ENCODE measurements at regions of chr10 and their contacts with region 1.

Region 1: DNA sequence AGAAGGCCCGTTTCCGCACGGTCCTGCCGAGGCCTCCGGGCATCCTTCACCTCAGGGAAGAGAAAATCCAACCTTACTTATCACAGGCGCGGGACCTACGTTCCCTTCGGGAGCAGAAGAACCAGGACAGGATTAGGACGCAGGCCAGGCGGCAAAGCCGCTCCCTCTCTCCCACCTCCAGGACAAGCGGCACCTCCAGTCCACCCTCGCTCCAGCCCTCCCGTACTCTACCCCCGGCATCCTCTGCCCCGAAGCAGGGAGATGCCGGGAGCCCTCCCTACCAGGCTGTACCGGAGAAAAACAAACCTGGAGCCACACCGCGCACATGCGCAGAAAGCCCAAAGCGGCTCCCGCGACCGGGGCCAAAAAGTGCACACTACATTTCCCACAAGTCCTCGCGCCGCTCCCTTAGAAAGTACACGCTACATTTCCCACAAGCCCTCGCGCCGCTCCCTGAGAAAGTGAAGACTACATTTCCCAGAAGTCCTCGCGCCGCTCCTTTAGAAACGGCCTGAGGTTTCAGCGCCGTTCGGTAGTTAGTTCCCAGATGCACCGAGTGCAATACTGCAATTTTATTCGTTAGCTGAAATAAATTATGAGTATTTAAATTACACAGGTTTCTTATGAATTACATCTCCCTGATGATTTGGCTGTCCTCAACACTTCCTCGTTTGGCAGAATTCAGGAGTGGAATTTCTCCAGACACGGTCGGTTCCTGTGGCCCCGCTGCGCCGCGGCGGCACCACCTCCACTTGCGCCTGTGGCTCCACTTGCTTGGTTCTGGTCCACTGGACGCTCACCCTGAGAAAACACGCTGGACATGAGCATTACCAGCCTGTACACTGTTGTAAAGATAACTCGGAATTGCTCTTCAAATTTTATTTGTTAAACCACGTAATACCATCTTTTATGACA is 85.6 kb downstream of the ZNF33B start:
- DNase-seq: peak; percentile 97 to 98
- H3K4me3 ChIP-seq: peak overlapping the region; percentile 89
- H3K4me3 Mint-ChIP-seq: peak overlapping the region; percentile 99
- H3K27ac Mint-ChIP-seq: peak overlapping the region; percentile 89
- H3K4me1 ChIP-seq: peaks cover 5% of the 10 kb centered on the region; the same call in 1 of the 2 replicates
- H3K4me1 Mint-ChIP-seq: no peaks in the 10 kb centered on the region
- H3K27me3 ChIP-seq: no peaks in the 10 kb centered on the region
- H3K27me3 Mint-ChIP-seq: no peaks in the 10 kb centered on the region
- CTCF ChIP-seq: no peak

Region 2: GRCh38 chr10:42513921-42514320 is 38.8 kb before region 1 on chr10:
- CTCF ChIA-PET with region 1: no interaction called
- POLR2A ChIA-PET with region 1: no interaction called
- intact Hi-C with region 1: no loop called
- DNase-seq: no peak
- H3K4me3 ChIP-seq: no peak overlapping the region
- H3K4me3 Mint-ChIP-seq: no peak overlapping the region
- H3K27ac Mint-ChIP-seq: no peak overlapping the region
- H3K4me1 ChIP-seq: no peaks in the 10 kb centered on the region
- H3K4me1 Mint-ChIP-seq: no peaks in the 10 kb centered on the region
- H3K27me3 ChIP-seq: no peaks in the 10 kb centered on the region
- H3K27me3 Mint-ChIP-seq: no peaks in the 10 kb centered on the region
- CTCF ChIP-seq: no peak

Region 3: GRCh38 chr10:42583828-42584227 is 31.1 kb after region 1 on chr10:
- CTCF ChIA-PET with region 1: no interaction called
- POLR2A ChIA-PET with region 1: no interaction called
- intact Hi-C with region 1: no loop called
- DNase-seq: no peak
- H3K4me3 ChIP-seq: no peak overlapping the region
- H3K4me3 Mint-ChIP-seq: no peak overlapping the region
- H3K27ac Mint-ChIP-seq: no peak overlapping the region
- H3K4me1 ChIP-seq: no peaks in the 10 kb centered on the region
- H3K4me1 Mint-ChIP-seq: no peaks in the 10 kb centered on the region
- H3K27me3 ChIP-seq: no peaks in the 10 kb centered on the region
- H3K27me3 Mint-ChIP-seq: no peaks in the 10 kb centered on the region
- CTCF ChIP-seq: no peak

Region 4: DNA sequence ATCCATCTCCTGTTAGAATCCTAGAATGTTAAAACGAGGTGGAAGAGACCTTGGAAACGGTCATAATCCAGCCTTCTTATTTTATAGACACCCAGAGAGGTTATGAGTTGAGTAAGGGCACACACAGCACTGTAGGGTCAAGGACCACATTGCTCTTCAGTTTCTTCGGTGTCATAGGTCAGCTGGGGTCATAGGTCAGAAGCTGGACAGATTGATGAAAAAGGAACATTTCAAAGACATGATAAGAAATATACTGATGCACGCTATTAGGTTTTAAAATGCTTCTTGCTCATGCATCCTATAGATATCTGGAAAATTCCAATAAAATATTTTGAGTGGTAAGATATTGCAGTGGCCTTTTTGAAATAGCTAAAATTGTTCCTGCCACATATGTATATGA is 169.8 kb after region 1 on chr10:
- CTCF ChIA-PET with region 1: no interaction called
- POLR2A ChIA-PET with region 1: no interaction called
- intact Hi-C with region 1: no loop called
- DNase-seq: no peak
- H3K4me3 ChIP-seq: no peak overlapping the region
- H3K4me3 Mint-ChIP-seq: no peak overlapping the region
- H3K27ac Mint-ChIP-seq: no peak overlapping the region
- H3K4me1 ChIP-seq: no peaks in the 10 kb centered on the region
- H3K4me1 Mint-ChIP-seq: no peaks in the 10 kb centered on the region
- H3K27me3 ChIP-seq: no peaks in the 10 kb centered on the region; the same call in 1 of the 2 replicates
- H3K27me3 Mint-ChIP-seq: peaks cover 4% of the 10 kb centered on the region
- CTCF ChIP-seq: no peak

Region 5: GRCh38 chr10:42782446-42783180 is 229.9 kb after region 1 on chr10 and contains the start of gene BMS1:
- CTCF ChIA-PET with region 1: no interaction called
- POLR2A ChIA-PET with region 1: interaction called, 4 read pairs
- intact Hi-C with region 1: loop called (anchors 1 kb)
- DNase-seq: peak; percentile 97
- H3K4me3 ChIP-seq: peak within 1 kb of the TSS; percentile 54
- H3K4me3 Mint-ChIP-seq: peak within 1 kb of the TSS; percentile 90
- H3K27ac Mint-ChIP-seq: peak within 1 kb of the TSS; percentile 96
- H3K4me1 ChIP-seq: no peaks in the 10 kb centered on the region
- H3K4me1 Mint-ChIP-seq: peaks cover 9% of the 10 kb centered on the region
- H3K27me3 ChIP-seq: no peaks in the 10 kb centered on the region
- H3K27me3 Mint-ChIP-seq: peaks cover 1% of the 10 kb centered on the region
- CTCF ChIP-seq: no peak
- total RNA-seq, gene BMS1: 36.3 and 38.2 TPM in 2 replicates